ENCODE measurements at regions of chr2 and their contacts with region 1.

Region 1: GRCh38 chr2:191222507-191222906 is 22.7 kb upstream of the MYO1B start:
- DNase-seq: no peak
- ATAC-seq: no peak
- H3K4me3 ChIP-seq: no peak overlapping the region
- H3K27ac ChIP-seq: no peak overlapping the region
- H3K4me1 ChIP-seq: peaks cover 41% of the 10 kb centered on the region
- H3K27me3 ChIP-seq: no peaks in the 10 kb centered on the region
- CTCF ChIP-seq: no peak
- POLR2A ChIP-seq: no peak

Region 2: DNA sequence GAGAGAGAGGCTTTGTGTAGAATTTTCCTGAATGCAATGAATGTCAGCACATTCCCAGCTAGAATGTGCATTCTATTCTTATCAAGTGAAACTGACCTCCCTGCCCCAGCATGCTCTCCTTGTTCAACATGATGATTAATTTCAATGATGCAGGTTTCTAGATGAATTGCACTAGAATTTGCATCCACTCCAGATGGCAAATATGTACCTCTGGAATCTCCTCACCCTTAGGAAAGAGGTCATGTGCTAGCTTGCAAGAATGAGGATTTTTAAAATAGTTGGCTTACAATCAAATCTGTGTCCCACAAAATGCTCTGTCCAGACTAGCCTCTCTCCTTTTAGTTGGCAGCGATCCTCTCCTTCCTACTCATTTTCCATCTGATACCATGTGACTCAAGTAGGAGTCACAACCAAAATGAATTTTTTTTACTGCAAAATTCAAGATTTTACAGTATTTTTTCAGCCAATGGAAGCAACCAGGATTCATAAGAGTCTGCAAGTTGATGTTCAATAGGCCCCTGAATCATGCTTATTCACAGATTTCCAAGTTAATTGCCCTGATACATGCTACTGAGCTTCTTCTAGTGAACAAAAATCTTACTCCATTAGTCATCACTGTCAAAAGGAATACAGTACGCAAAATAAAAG is 50.7 kb before region 1 on chr2:
- intact Hi-C with region 1: loop called (anchors 10 kb)
- DNase-seq: peak in 1 of 4 donors; percentile 31
- ATAC-seq: peak; percentile 84
- H3K4me3 ChIP-seq: no peak overlapping the region
- H3K27ac ChIP-seq: peak overlapping the region; percentile 40 to 78 (median 62)
- H3K4me1 ChIP-seq: peaks cover 20% of the 10 kb centered on the region
- H3K27me3 ChIP-seq: no peaks in the 10 kb centered on the region
- CTCF ChIP-seq: no peak
- POLR2A ChIP-seq: no peak